CD8-positive, alpha-beta T cell (primary cell): ENCODE measurements at regions of chrX and their contacts with region 1.

Region 1: GRCh38 chrX:23782863-23783568 is at the start of gene SAT1:
- DNase-seq: peak; percentile 86 to 96 (median 92)
- ATAC-seq: peak; percentile 88
- H3K4me3 ChIP-seq: peak within 1 kb of the TSS; percentile 91 to 94
- H3K4me3 Mint-ChIP-seq: peak within 1 kb of the TSS; percentile 97
- H3K27ac ChIP-seq: peak within 1 kb of the TSS; percentile 92 to 96
- H3K27ac Mint-ChIP-seq: peak within 1 kb of the TSS; percentile 99
- H3K4me1 ChIP-seq: peaks cover 25% of the 10 kb centered on the region
- H3K4me1 Mint-ChIP-seq: peaks cover 35% of the 10 kb centered on the region
- H3K27me3 ChIP-seq: no peaks in the 10 kb centered on the region
- H3K27me3 Mint-ChIP-seq: no peaks in the 10 kb centered on the region
- CTCF ChIP-seq: peak; percentile 60
- total RNA-seq, gene SAT1: 270 to 285 TPM

Region 2: GRCh38 chrX:23667239-23668177 is 115.5 kb before region 1 on chrX and contains the start of gene PRDX4:
- CTCF ChIA-PET with region 1: no interaction called
- POLR2A ChIA-PET with region 1: no interaction called
- intact Hi-C with region 1: loop called in 1 of 2 experiments (anchors 2 kb)
- DNase-seq: peak; percentile 37 to 84 (median 64)
- ATAC-seq: peak; percentile 85
- H3K4me3 ChIP-seq: peak within 1 kb of the TSS; percentile 62 to 67
- H3K4me3 Mint-ChIP-seq: peak within 1 kb of the TSS; percentile 92
- H3K27ac ChIP-seq: peak within 1 kb of the TSS; percentile 66 to 68
- H3K27ac Mint-ChIP-seq: peak within 1 kb of the TSS; percentile 86
- H3K4me1 ChIP-seq: peaks cover 11% of the 10 kb centered on the region
- H3K4me1 Mint-ChIP-seq: peaks cover 25% of the 10 kb centered on the region
- H3K27me3 ChIP-seq: no peaks in the 10 kb centered on the region
- H3K27me3 Mint-ChIP-seq: no peaks in the 10 kb centered on the region
- CTCF ChIP-seq: no peak
- total RNA-seq, gene PRDX4: 2.2 to 3.6 TPM

Region 3: DNA sequence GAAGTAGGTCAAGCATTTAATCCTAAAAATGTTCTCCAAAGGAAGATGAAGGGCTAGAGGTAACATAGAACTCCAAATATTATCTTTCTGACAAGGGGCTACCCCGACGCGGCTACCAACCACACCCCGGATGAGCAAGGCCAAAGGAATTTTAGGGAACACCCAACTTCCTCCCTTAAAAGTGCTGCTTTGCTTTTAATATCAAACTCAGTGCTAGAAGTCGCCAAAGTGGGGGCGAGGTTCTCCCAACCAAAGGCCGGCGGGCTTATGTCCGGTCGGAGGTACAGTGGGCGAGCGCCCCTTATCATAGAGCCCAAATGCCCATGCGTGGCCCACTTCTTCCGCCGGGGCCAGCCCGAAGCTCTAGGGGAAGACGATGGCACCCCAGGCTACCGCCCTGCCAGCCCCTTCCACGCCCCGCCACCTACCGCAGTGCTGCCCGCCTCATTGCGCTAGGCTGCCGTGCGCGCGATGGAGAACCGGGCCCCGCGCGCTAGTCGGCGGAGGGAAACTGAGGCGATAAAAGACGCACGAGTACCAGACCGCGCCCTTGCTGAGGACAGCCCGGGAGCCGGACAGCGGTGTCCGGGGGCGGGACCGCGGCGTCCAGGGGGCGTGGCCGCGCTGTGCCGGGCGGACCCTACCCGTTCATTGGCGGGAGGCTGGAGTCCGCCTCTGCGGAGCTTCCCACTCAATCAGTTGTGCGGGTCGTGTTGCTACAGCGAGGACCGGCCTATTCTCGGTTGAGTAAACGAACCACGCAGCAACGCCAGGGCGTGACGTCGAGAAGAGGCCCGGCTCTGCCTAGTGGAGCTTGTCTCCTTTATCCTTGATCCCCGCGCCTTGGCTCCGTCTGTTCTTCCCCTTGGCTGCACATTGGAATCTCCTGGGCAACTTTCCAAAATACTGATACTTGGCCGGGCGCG is 40.1 kb before region 1 on chrX and contains the start of gene ACOT9:
- CTCF ChIA-PET with region 1: interaction called, 6 read pairs
- POLR2A ChIA-PET with region 1: interaction called, 10 read pairs
- intact Hi-C with region 1: loop called (anchors 1 to 5 kb)
- DNase-seq: peak; percentile 32 to 83 (median 60)
- ATAC-seq: peak; percentile 87
- H3K4me3 ChIP-seq: peak within 1 kb of the TSS; percentile 72 to 75
- H3K4me3 Mint-ChIP-seq: peak within 1 kb of the TSS; percentile 87
- H3K27ac ChIP-seq: peak within 1 kb of the TSS; percentile 51 to 66
- H3K27ac Mint-ChIP-seq: peak within 1 kb of the TSS; percentile 84
- H3K4me1 ChIP-seq: peaks cover 8% of the 10 kb centered on the region
- H3K4me1 Mint-ChIP-seq: peaks cover 35% of the 10 kb centered on the region
- H3K27me3 ChIP-seq: no peaks in the 10 kb centered on the region
- H3K27me3 Mint-ChIP-seq: no peaks in the 10 kb centered on the region
- CTCF ChIP-seq: no peak
- total RNA-seq, gene ACOT9: 19.3 to 21.3 TPM

Region 4: DNA sequence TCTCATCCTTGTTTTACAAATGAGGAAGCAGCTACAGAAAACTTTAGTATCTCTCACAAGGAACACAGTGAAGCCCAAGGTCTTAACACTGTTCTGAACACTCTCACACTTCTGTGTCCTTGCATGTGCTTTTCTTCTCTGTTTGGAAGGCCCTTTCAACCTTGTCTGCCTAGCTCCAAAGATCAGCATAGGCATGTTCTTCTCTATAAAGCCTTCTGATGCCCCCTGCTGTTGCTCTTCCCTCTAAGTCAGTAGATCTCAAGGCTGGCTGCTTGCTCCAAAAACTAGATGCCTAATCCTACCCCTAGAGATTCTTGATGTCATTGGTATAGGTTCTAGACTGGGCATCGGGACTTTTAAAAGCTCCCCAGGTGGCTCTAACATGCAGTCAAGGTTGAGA is 118.8 kb after region 1 on chrX:
- CTCF ChIA-PET with region 1: interaction called, 27 read pairs
- POLR2A ChIA-PET with region 1: interaction called, 14 read pairs
- intact Hi-C with region 1: loop called (anchors 1 kb)
- DNase-seq: peak in 6 of 9 experiments; percentile 6 to 66 (median 34)
- ATAC-seq: peak; percentile 80
- H3K4me3 ChIP-seq: no peak overlapping the region
- H3K4me3 Mint-ChIP-seq: no peak overlapping the region
- H3K27ac ChIP-seq: no peak overlapping the region
- H3K27ac Mint-ChIP-seq: no peak overlapping the region
- H3K4me1 ChIP-seq: peaks cover 6% of the 10 kb centered on the region
- H3K4me1 Mint-ChIP-seq: peaks cover 5% of the 10 kb centered on the region
- H3K27me3 ChIP-seq: no peaks in the 10 kb centered on the region
- H3K27me3 Mint-ChIP-seq: no peaks in the 10 kb centered on the region
- CTCF ChIP-seq: no peak

Region 5: DNA sequence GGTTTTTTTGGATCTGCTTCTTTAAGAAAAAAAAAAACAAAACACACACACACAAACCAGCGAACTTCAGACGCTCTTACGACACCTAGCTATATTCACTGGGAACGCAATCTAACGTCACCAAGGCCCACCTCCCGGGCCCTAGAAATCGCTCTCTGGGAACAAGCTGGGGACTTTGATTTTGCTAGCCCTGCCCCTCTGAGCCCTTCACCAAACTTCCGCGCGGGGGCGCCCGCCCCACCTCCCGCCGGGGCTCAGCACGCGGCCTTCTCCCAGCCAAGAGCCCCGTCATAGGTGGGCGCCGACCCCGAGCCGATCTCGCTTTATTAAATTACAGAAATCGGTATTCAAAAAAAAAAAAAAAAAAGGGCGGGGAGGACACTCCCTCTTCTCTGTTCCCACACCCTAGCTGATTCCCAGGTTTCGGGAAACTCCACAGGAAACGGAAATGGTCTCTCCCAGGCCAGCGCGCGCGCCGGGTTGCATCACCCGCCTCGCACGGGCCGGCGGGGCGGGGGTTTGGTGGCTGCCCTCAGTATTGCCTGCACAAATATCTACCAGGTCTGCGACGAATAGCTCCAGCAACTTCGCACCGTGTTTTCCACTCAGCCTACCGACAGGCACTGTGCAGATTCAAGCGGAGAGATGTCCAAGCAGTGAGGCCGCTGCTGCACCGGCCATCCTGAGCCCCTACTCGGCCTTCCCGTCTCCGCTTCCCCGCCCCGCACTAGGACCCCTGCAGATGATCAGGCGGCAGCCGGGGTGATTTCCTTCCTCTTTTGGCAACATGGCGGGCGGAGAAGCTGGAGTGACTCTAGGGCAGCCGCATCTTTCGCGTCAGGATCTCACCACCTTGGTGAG is 271.4 kb after region 1 on chrX and contains the start of gene EIF2S3:
- CTCF ChIA-PET with region 1: interaction called, 7 read pairs
- POLR2A ChIA-PET with region 1: interaction called, 15 read pairs
- intact Hi-C with region 1: loop called (anchors 1 to 2 kb)
- DNase-seq: peak; percentile 69 to 94 (median 86)
- ATAC-seq: peak; percentile 82
- H3K4me3 ChIP-seq: peak within 1 kb of the TSS; percentile 87 to 92
- H3K4me3 Mint-ChIP-seq: no peak within 1 kb of the TSS
- H3K27ac ChIP-seq: peak within 1 kb of the TSS; percentile 91 to 96
- H3K27ac Mint-ChIP-seq: peak within 1 kb of the TSS; percentile 99
- H3K4me1 ChIP-seq: peaks cover 3% of the 10 kb centered on the region
- H3K4me1 Mint-ChIP-seq: peaks cover 6% of the 10 kb centered on the region
- H3K27me3 ChIP-seq: no peaks in the 10 kb centered on the region
- H3K27me3 Mint-ChIP-seq: no peaks in the 10 kb centered on the region
- CTCF ChIP-seq: no peak
- total RNA-seq, gene EIF2S3: 180 to 184 TPM

Region 6: GRCh38 chrX:24464836-24465531 is 682.0 kb after region 1 on chrX and contains the start of gene PDK3:
- CTCF ChIA-PET with region 1: no interaction called
- POLR2A ChIA-PET with region 1: no interaction called
- intact Hi-C with region 1: loop called in 1 of 2 experiments (anchors 10 kb)
- DNase-seq: peak; percentile 77 to 94 (median 87)
- ATAC-seq: peak; percentile 94
- H3K4me3 ChIP-seq: peak within 1 kb of the TSS; percentile 60 to 81
- H3K4me3 Mint-ChIP-seq: peak within 1 kb of the TSS; percentile 83
- H3K27ac ChIP-seq: peak within 1 kb of the TSS; percentile 77 to 86
- H3K27ac Mint-ChIP-seq: peak within 1 kb of the TSS; percentile 94
- H3K4me1 ChIP-seq: peaks cover 36% of the 10 kb centered on the region
- H3K4me1 Mint-ChIP-seq: peaks cover 39% of the 10 kb centered on the region
- H3K27me3 ChIP-seq: no peaks in the 10 kb centered on the region
- H3K27me3 Mint-ChIP-seq: no peaks in the 10 kb centered on the region
- CTCF ChIP-seq: no peak
- total RNA-seq, gene PDK3: 13.3 to 16.8 TPM